ENCODE measurements at regions of chr13 and their contacts with region 1.

Region 1: DNA sequence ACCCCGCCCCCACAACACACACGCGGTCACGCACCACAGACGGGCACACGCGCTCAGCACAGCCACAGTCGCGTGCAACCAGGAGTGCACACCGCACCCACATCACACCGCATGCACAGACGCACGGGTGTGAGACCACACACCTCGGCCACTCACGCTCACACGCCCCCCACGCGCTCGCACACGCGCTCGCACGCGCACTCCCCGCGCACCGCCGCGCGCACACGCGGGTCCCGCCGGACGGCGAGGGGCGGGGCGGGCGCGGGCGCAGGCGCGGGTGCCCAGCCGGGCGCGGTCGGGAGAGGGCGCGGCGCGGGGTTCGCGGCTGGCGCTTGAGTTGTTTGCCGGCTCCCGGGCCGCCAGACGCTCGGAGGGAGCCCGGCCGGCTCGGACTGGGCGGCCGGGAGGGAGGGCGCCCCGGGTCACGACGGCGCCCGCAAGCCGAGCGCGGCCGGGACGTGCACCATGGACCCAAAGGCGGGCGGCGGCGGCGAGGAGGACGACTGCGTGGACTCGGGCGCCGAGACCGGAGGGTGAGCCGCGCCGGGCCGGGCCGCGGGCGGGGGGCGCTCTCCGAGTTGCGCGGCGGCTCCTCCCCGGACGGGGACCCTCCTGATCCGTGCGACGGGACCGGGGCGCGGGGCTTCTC is at the start of gene FAM124A:
- DNase-seq: peak; percentile 20 to 43 (median 33)
- H3K4me3 ChIP-seq: peak within 1 kb of the TSS; percentile 45 to 78 (median 49)
- H3K4me3 Mint-ChIP-seq: peak within 1 kb of the TSS; percentile 85 to 91
- H3K27ac ChIP-seq: no peak within 1 kb of the TSS
- H3K27ac Mint-ChIP-seq: peak within 1 kb of the TSS in 2 of 7 donors; percentile 30 to 41
- H3K4me1 ChIP-seq: peaks cover 32 to 38% of the 10 kb centered on the region in 2 donors
- H3K4me1 Mint-ChIP-seq: peaks cover 33% of the 10 kb centered on the region
- H3K27me3 ChIP-seq: peaks cover 14 to 36% of the 10 kb centered on the region in 2 donors
- H3K27me3 Mint-ChIP-seq: peaks cover 24 to 40% (median 34%) of the 10 kb centered on the region in 3 donors
- CTCF ChIP-seq: peak; percentile 52
- polyA plus RNA-seq, gene FAM124A: 0.03 to 0.20 (median 0.13) TPM

Region 2: GRCh38 chr13:51286135-51287002 is 64.2 kb after region 1 on chr13:
- intact Hi-C with region 1: loop called in 1 of 2 experiments (anchors 5 kb)
- DNase-seq: peak; percentile 52 to 65 (median 55)
- H3K4me3 ChIP-seq: no peak overlapping the region
- H3K4me3 Mint-ChIP-seq: peak overlapping the region in 1 of 2 donors; percentile 55
- H3K27ac ChIP-seq: no peak overlapping the region
- H3K27ac Mint-ChIP-seq: no peak overlapping the region
- H3K4me1 ChIP-seq: no peaks in the 10 kb centered on the region
- H3K4me1 Mint-ChIP-seq: peaks cover 2% of the 10 kb centered on the region
- H3K27me3 ChIP-seq: no peaks in the 10 kb centered on the region
- H3K27me3 Mint-ChIP-seq: peaks cover 2 to 5% (median 3%) of the 10 kb centered on the region in 3 donors
- CTCF ChIP-seq: peak; percentile 93

Measured in CD14-positive monocyte (primary cell).